ENCODE measurements at regions of chr16 and their contacts with region 1.

Region 1: DNA sequence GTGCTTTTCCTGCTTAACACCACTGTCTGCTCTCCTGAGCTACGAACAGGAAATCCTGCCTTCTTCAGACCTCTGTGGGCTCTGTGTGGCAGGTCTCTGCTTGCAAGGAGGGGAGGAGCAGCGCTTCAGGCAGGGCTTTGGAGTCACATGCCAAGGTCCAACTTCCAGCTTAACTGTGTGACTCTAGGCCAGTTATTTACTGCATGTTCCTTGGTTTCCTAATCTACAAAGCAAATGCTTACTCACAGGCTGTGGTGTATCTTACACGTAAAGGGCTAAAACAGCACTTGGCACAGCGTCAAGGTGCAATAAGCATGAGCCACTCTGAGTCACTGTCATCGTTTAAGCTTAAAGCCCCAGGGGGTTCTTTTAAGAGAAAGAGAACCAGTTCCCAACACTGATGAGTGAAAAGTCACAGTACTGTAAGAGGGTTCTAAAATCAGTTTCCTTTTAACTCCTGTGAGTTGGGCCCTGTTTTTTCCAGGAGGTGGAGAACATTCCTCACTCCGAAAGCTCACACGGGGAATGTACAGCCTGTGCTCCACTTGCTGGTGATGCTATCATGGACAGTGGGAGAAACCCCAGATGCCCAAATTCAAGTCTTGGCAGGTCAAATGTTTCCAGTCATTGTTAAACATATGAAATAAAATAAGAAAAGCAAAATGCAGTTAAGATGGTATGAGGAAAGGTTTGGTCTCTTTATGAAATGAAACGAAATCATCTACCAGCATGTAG is 54.1 kb upstream of the BCAR1 start:
- DNase-seq: peak; percentile 72 to 89 (median 86)
- ATAC-seq: peak; percentile 71 to 88 (median 83)
- H3K4me3 ChIP-seq: no peak overlapping the region
- H3K27ac ChIP-seq: peak overlapping the region; percentile 80 to 92 (median 92)
- H3K4me1 ChIP-seq: peaks cover 43 to 62% (median 57%) of the 10 kb centered on the region in 3 donors
- H3K27me3 ChIP-seq: no peaks in the 10 kb centered on the region
- CTCF ChIP-seq: no peak

Region 2: DNA sequence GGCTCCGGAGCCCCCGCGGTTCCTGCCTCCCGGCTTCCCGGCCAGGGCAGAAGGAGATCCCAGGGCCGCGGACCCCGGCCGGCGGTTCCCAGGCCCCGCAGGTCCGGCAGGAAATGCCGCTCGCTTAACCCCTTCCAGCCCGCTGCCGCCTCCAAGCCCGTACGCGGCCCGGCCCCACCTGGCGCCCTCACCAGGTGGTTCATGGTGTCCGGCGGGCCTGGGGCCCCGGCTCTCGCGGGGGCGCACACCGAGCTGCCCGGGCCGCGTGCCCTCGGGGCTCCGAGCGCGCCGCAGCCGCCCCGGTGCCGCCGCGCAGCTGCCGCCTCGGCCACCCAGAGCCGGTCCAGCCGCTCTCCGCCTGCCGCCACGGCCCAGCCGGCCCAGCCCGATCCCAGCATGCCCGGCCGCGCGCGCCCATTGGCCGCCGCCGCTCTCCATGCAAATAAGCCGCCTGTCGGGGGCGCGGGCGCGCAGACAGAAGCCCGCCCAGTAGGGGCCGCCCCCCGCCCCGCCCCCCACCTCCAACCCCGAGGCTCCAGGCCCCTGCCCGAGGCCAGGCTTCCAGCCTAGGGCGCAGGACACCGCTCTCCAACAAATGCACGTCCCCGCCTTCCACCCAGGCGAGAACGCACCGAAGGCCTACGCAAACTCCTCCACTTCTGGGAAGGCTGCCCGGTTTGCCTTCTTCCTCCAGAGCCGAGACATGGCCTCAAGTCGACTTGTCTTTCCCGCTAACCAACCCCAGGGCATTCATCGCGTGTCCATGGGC is 54.1 kb before region 1 on chr16 and contains the start of gene BCAR1:
- intact Hi-C with region 1: loop called in 2 of 3 experiments (anchors 10 kb)
- DNase-seq: peak; percentile 88 to 96 (median 90)
- ATAC-seq: peak; percentile 64 to 79 (median 76)
- H3K4me3 ChIP-seq: peak within 1 kb of the TSS; percentile 73 to 95 (median 88)
- H3K27ac ChIP-seq: peak within 1 kb of the TSS; percentile 95 to 99 (median 97)
- H3K4me1 ChIP-seq: peaks cover 23 to 35% (median 32%) of the 10 kb centered on the region in 3 donors
- H3K27me3 ChIP-seq: no peaks in the 10 kb centered on the region
- CTCF ChIP-seq: no peak
- total RNA-seq, gene BCAR1: 30.1 to 56.9 (median 40.4) TPM

Region 3: DNA sequence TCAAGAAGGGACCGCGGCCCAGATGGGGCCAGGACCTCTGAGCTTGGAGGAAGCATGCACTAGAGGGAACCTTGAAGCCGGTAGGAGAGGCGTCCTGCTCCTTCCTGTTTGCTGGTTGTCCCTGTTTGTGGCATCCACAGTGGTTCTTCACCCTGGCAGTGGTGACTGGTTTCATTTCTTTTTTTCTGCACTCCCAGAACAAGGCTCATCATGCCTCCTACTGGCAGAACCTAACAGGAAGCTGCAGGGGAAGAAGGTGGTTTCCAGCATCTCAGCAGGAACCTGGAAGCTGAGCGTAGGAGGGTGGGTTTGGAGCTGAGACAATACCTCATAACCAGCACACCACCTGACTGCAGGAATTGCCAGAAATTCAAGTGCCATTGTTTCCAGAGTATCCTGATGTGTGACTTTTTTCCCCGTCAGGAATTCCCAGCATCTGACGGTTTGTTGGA is 244.7 kb after region 1 on chr16:
- intact Hi-C with region 1: no loop called
- DNase-seq: peak in 1 of 6 donors; percentile 25
- ATAC-seq: peak in 3 of 4 donors; percentile 27 to 67 (median 58)
- H3K4me3 ChIP-seq: no peak overlapping the region
- H3K27ac ChIP-seq: no peak overlapping the region
- H3K4me1 ChIP-seq: no peaks in the 10 kb centered on the region
- H3K27me3 ChIP-seq: no peaks in the 10 kb centered on the region
- CTCF ChIP-seq: peak in 1 of 4 donors; percentile 9

Measured in pancreas (tissue), 10 donors.